ENCODE measurements at regions of chr4 and their contacts with region 1.

Region 1: GRCh38 chr4:112145326-112145819 is at the start of gene FAM241A:
- DNase-seq: peak; percentile 92
- ATAC-seq: peak; percentile 96 to 100 (median 98)
- H3K4me3 ChIP-seq: peak within 1 kb of the TSS; percentile 73 to 93 (median 88)
- H3K27ac ChIP-seq: peak within 1 kb of the TSS; percentile 70 to 97 (median 92)
- H3K4me1 ChIP-seq: peaks cover 5 to 71% (median 54%) of the 10 kb centered on the region in 9 donors
- H3K27me3 ChIP-seq: no peaks in the 10 kb centered on the region
- CTCF ChIP-seq: no peak
- total RNA-seq, gene FAM241A: 6.0 to 9.4 (median 7.8) TPM

Region 2: GRCh38 chr4:111512081-111512783 is 633.1 kb before region 1 on chr4:
- intact Hi-C with region 1: no loop called
- DNase-seq: no peak
- ATAC-seq: no peak
- H3K4me3 ChIP-seq: no peak overlapping the region
- H3K27ac ChIP-seq: no peak overlapping the region
- H3K4me1 ChIP-seq: no peaks in the 10 kb centered on the region
- H3K27me3 ChIP-seq: no peaks in the 10 kb centered on the region
- CTCF ChIP-seq: no peak

Region 3: GRCh38 chr4:112099701-112100297 is 45.6 kb before region 1 on chr4:
- intact Hi-C with region 1: loop called in 6 of 10 experiments (anchors 5 kb)
- DNase-seq: no peak
- ATAC-seq: peak in 6 of 8 donors; percentile 75 to 88 (median 79)
- H3K4me3 ChIP-seq: no peak overlapping the region
- H3K27ac ChIP-seq: no peak overlapping the region
- H3K4me1 ChIP-seq: peaks cover 0 to 19% (median 7%) of the 10 kb centered on the region in 9 donors
- H3K27me3 ChIP-seq: no peaks in the 10 kb centered on the region
- CTCF ChIP-seq: peak; percentile 44 to 84 (median 75)

Region 4: GRCh38 chr4:112109186-112110058 is 36.0 kb before region 1 on chr4:
- intact Hi-C with region 1: loop called in 6 of 10 experiments (anchors 5 kb)
- DNase-seq: no peak
- ATAC-seq: peak; percentile 54 to 87 (median 72)
- H3K4me3 ChIP-seq: peak overlapping the region in 1 of 10 donors; percentile 20
- H3K27ac ChIP-seq: peak overlapping the region in 9 of 10 donors; percentile 13 to 79 (median 53)
- H3K4me1 ChIP-seq: peaks cover 0 to 24% (median 17%) of the 10 kb centered on the region in 9 donors
- H3K27me3 ChIP-seq: no peaks in the 10 kb centered on the region
- CTCF ChIP-seq: peak in 2 of 9 donors; percentile 7 to 13

Region 5: GRCh38 chr4:112127803-112128202 is 17.6 kb before region 1 on chr4:
- intact Hi-C with region 1: loop called in 1 of 10 experiments (anchors 2 kb)
- DNase-seq: no peak
- ATAC-seq: no peak
- H3K4me3 ChIP-seq: no peak overlapping the region
- H3K27ac ChIP-seq: peak overlapping the region in 7 of 10 donors; percentile 9 to 59 (median 37)
- H3K4me1 ChIP-seq: peaks cover 0 to 41% (median 16%) of the 10 kb centered on the region in 9 donors
- H3K27me3 ChIP-seq: no peaks in the 10 kb centered on the region
- CTCF ChIP-seq: no peak

Region 6: GRCh38 chr4:112189754-112190153 is 44.4 kb after region 1 on chr4:
- intact Hi-C with region 1: loop called in 1 of 10 experiments (anchors 5 kb)
- DNase-seq: no peak
- ATAC-seq: no peak
- H3K4me3 ChIP-seq: no peak overlapping the region
- H3K27ac ChIP-seq: no peak overlapping the region
- H3K4me1 ChIP-seq: peaks cover 0 to 6% (median 0%) of the 10 kb centered on the region in 9 donors
- H3K27me3 ChIP-seq: no peaks in the 10 kb centered on the region
- CTCF ChIP-seq: peak in 7 of 9 donors; percentile 10 to 54 (median 24)

Region 7: DNA sequence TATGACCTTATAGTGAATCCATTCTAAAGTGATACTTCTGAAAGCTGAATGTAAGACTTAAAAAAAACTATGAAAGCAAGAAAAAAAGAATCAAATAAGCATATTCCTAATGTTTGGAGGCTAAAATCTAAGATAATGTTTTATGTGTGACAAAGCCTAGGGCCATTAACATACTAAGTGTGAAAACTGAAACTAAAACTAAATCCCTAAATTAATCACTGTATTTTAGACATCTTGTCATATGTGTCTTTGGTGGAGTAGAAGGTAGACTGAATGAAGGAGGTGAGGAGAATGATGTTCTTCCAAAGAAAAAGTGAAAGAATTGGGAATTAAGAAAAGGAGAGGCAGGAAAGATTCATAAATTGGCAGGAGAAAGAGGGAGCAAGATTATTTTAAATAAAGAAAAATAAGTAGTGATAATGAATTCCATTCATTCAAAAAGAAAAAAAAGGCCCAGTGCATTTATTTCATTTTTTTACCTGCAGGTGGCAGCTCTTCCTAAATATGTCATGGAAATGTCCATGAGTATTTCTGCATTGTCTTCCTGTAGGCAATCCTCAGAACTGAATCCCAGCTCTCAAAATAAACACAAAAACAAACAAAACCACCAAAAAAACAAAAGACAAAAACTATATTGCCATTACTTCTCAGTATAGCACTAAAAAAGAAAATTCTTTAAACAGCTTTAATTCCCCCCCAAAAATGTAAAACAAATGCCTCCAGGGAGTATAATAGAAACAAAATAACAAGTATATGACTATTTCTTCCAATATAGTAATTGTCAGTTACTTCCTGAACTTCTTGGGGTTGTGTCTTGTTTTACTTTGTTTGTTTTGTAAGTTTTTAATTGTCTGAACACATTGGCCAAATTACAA is 69.3 kb after region 1 on chr4:
- intact Hi-C with region 1: no loop called
- DNase-seq: no peak
- ATAC-seq: no peak
- H3K4me3 ChIP-seq: no peak overlapping the region
- H3K27ac ChIP-seq: peak overlapping the region in 1 of 10 donors; percentile 39
- H3K4me1 ChIP-seq: peaks cover 0 to 19% (median 0%) of the 10 kb centered on the region in 9 donors
- H3K27me3 ChIP-seq: no peaks in the 10 kb centered on the region
- CTCF ChIP-seq: peak in 7 of 9 donors; percentile 37 to 59 (median 55)

Region 8: DNA sequence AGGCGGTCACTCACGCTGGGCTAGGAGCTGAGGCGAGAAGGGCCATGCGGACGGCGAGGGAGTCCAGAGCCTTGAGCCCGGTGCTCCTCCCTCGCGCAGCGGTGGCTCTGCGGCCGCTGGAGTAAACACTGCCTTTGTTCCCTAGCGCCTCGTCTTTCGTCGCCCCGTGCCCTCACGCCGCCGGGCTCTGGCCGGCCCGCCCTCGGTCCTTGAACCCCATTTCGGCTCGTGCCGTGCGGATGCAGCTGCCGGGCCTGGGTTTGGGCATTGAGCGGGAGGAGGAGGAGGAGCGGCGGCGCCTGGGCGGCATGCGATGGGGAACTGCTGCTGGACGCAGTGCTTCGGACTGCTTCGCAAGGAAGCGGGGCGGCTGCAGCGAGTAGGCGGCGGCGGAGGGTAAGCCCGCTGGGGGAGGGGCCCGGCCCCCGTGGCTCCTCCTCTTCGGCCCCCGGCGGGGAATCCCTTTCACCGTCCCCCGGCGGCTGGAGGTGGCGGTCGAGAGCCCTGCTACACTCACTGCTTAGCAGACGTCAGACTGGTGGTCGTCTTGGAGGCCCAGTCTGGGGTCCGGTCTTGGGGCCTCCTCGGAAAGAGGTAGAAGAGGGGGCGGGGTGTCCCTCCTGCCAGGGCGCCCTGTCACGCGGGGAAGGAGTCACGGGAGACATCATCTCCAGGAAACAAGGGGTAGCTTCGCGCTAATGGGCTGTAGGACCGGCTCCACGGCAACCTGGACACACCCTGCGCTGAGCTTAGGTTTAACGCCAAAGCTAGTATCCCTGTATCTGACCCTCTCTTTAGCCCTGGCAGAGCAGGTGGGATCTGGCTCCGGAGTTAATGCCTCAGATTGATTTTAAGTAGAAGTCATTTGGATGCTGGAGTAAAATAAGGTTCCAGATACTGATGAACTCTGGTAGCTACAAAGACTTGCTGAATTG is 86.7 kb after region 1 on chr4 and contains the start of gene AP1AR:
- intact Hi-C with region 1: loop called in 7 of 10 experiments (anchors 2 to 5 kb)
- DNase-seq: peak; percentile 83 to 84
- ATAC-seq: peak; percentile 82 to 92 (median 83)
- H3K4me3 ChIP-seq: peak within 1 kb of the TSS; percentile 80 to 97 (median 92)
- H3K27ac ChIP-seq: peak within 1 kb of the TSS; percentile 79 to 97 (median 94)
- H3K4me1 ChIP-seq: peaks cover 0 to 37% (median 20%) of the 10 kb centered on the region in 9 donors
- H3K27me3 ChIP-seq: no peaks in the 10 kb centered on the region
- CTCF ChIP-seq: peak in 7 of 9 donors; percentile 20 to 58 (median 33)
- total RNA-seq, gene AP1AR: 7.6 to 13.4 (median 11.4) TPM